PC-9 (cell line): ENCODE measurements at regions of chr12 and their contacts with region 1.

Region 1: GRCh38 chr12:95553197-95553943 is 2.1 kb upstream of the USP44 start:
- DNase-seq: no peak
- H3K4me3 ChIP-seq: no peak overlapping the region
- H3K27ac ChIP-seq: no peak overlapping the region
- H3K4me1 ChIP-seq: no peaks in the 10 kb centered on the region; the same call in 1 of the 2 replicates
- H3K27me3 ChIP-seq: no peaks in the 10 kb centered on the region
- CTCF ChIP-seq: no peak

Region 2: GRCh38 chr12:94832780-94833681 is 720.3 kb before region 1 on chr12:
- CTCF ChIA-PET with region 1: interaction called, 16 read pairs
- POLR2A ChIA-PET with region 1: no interaction called
- intact Hi-C with region 1: no loop called
- DNase-seq: peak in 1 of 2 experiments; percentile 13
- H3K4me3 ChIP-seq: no peak overlapping the region
- H3K27ac ChIP-seq: no peak overlapping the region
- H3K4me1 ChIP-seq: no peaks in the 10 kb centered on the region
- H3K27me3 ChIP-seq: no peaks in the 10 kb centered on the region
- CTCF ChIP-seq: no peak

Region 3: GRCh38 chr12:95037906-95038305 is 515.5 kb before region 1 on chr12:
- CTCF ChIA-PET with region 1: interaction called, 12 read pairs
- POLR2A ChIA-PET with region 1: no interaction called
- intact Hi-C with region 1: no loop called
- DNase-seq: no peak
- H3K4me3 ChIP-seq: no peak overlapping the region
- H3K27ac ChIP-seq: no peak overlapping the region
- H3K4me1 ChIP-seq: no peaks in the 10 kb centered on the region
- H3K27me3 ChIP-seq: no peaks in the 10 kb centered on the region
- CTCF ChIP-seq: no peak

Region 4: GRCh38 chr12:95402096-95402495 is 151.3 kb before region 1 on chr12:
- CTCF ChIA-PET with region 1: no interaction called
- POLR2A ChIA-PET with region 1: no interaction called
- intact Hi-C with region 1: no loop called
- DNase-seq: no peak
- H3K4me3 ChIP-seq: no peak overlapping the region
- H3K27ac ChIP-seq: no peak overlapping the region
- H3K4me1 ChIP-seq: peaks cover 11% of the 10 kb centered on the region
- H3K27me3 ChIP-seq: no peaks in the 10 kb centered on the region
- CTCF ChIP-seq: no peak